Right ventricle myocardium inferior (tissue), 1 donor: ENCODE measurements at regions of chr9 and their contacts with region 1.

Region 1: GRCh38 chr9:37575921-37576721 is at the start of gene FBXO10:
- DNase-seq: peak; percentile 88
- ATAC-seq: peak; percentile 97
- total RNA-seq, gene FBXO10: 8.4 TPM

Region 2: GRCh38 chr9:37422289-37423104 is 153.6 kb before region 1 on chr9 and contains the start of gene GRHPR:
- intact Hi-C with region 1: loop called (anchors 10 kb)
- DNase-seq: peak; percentile 97
- ATAC-seq: peak; percentile 99
- total RNA-seq, gene GRHPR: 111 TPM

Region 3: GRCh38 chr9:37485389-37486219 is 90.5 kb before region 1 on chr9 and contains the start of gene POLR1E:
- intact Hi-C with region 1: loop called (anchors 10 kb)
- DNase-seq: peak; percentile 98
- ATAC-seq: peak; percentile 98
- total RNA-seq, gene POLR1E: 10.5 TPM

Region 4: GRCh38 chr9:37592108-37592951 is 16.2 kb after region 1 on chr9 and contains the start of gene TOMM5:
- intact Hi-C with region 1: loop called (anchors 1 kb)
- DNase-seq: peak; percentile 96
- ATAC-seq: peak; percentile 99
- total RNA-seq, gene TOMM5: 62.3 TPM

Region 5: GRCh38 chr9:37746848-37747753 is 171.0 kb after region 1 on chr9:
- intact Hi-C with region 1: loop called (anchors 10 kb)
- DNase-seq: no peak
- ATAC-seq: peak; percentile 57

Region 6: GRCh38 chr9:37784616-37785483 is 208.7 kb after region 1 on chr9 and contains the start of gene EXOSC3:
- intact Hi-C with region 1: loop called (anchors 5 kb)
- DNase-seq: peak; percentile 95
- ATAC-seq: peak; percentile 96
- total RNA-seq, gene EXOSC3: 17.0 TPM